B cell (primary cell): ENCODE measurements at regions of chr19 and their contacts with region 1.

Region 1: GRCh38 chr19:48646001-48646721 is at the start of gene CA11:
- DNase-seq: peak; percentile 94
- ATAC-seq: peak; percentile 87
- H3K4me3 ChIP-seq: peak within 1 kb of the TSS; percentile 52 to 95 (median 75)
- H3K4me3 Mint-ChIP-seq: peak within 1 kb of the TSS; percentile 96
- H3K27ac ChIP-seq: peak within 1 kb of the TSS; percentile 74 to 80
- H3K27ac Mint-ChIP-seq: peak within 1 kb of the TSS; percentile 98
- H3K4me1 ChIP-seq: peaks cover 23 to 45% of the 10 kb centered on the region in 2 donors
- H3K4me1 Mint-ChIP-seq: peaks cover 50% of the 10 kb centered on the region
- H3K27me3 ChIP-seq: no peaks in the 10 kb centered on the region
- H3K27me3 Mint-ChIP-seq: no peaks in the 10 kb centered on the region
- CTCF ChIP-seq: peak; percentile 80
- total RNA-seq, gene CA11: 25.7 and 27.7 TPM in 2 replicates

Region 2: GRCh38 chr19:48558018-48558684 is 88.0 kb before region 1 on chr19:
- CTCF ChIA-PET with region 1: no interaction called
- POLR2A ChIA-PET with region 1: no interaction called
- intact Hi-C with region 1: no loop called
- DNase-seq: no peak
- ATAC-seq: no peak
- H3K4me3 ChIP-seq: no peak overlapping the region
- H3K4me3 Mint-ChIP-seq: no peak overlapping the region
- H3K27ac ChIP-seq: no peak overlapping the region
- H3K27ac Mint-ChIP-seq: no peak overlapping the region
- H3K4me1 ChIP-seq: no peaks in the 10 kb centered on the region
- H3K4me1 Mint-ChIP-seq: no peaks in the 10 kb centered on the region
- H3K27me3 ChIP-seq: peaks cover 0 to 5% (median 0%) of the 10 kb centered on the region in 4 experiments
- H3K27me3 Mint-ChIP-seq: peaks cover 20% of the 10 kb centered on the region
- CTCF ChIP-seq: no peak

Region 3: DNA sequence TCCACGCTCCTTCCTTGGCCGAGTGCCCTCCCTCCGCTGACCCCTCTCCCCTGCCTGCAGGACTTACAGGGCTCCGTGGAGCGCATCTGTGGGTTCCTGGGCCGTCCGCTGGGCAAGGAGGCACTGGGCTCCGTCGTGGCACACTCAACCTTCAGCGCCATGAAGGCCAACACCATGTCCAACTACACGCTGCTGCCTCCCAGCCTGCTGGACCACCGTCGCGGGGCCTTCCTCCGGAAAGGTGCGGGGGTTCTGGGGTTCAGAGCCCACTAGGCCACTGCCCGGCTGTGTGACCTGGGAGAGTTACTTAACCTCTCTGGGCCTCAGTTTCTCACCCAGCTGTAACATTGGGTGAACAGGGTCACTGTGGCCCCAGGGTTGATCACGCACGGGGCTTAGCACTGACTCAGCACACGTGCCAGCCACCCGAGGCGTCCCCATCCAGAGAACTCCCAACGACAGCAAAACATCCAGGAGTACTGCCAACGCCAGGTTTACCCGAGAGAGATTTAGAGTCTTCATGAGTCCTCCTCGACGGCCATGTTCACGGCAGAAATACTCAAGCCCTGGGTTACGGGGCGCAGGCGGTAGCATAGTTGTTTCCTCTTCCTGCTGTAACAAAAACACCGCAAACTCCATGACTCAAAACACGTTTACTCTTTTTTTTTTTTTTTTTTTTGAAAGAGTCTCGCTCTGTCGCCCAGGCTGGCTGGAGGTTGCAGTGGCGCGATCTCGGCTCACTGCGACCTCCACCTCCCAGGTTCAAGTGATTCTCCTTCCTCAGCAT is 49.3 kb before region 1 on chr19:
- CTCF ChIA-PET with region 1: no interaction called
- POLR2A ChIA-PET with region 1: no interaction called
- intact Hi-C with region 1: no loop called
- DNase-seq: peak; percentile 53
- ATAC-seq: peak; percentile 41
- H3K4me3 ChIP-seq: no peak overlapping the region
- H3K4me3 Mint-ChIP-seq: no peak overlapping the region
- H3K27ac ChIP-seq: no peak overlapping the region
- H3K27ac Mint-ChIP-seq: no peak overlapping the region
- H3K4me1 ChIP-seq: no peaks in the 10 kb centered on the region
- H3K4me1 Mint-ChIP-seq: peaks cover 2% of the 10 kb centered on the region
- H3K27me3 ChIP-seq: peaks cover 0 to 3% (median 0%) of the 10 kb centered on the region in 4 experiments
- H3K27me3 Mint-ChIP-seq: peaks cover 4% of the 10 kb centered on the region
- CTCF ChIP-seq: no peak

Region 4: GRCh38 chr19:48624067-48624594 is 22.0 kb before region 1 on chr19:
- CTCF ChIA-PET with region 1: interaction called, 3 read pairs
- POLR2A ChIA-PET with region 1: interaction called, 19 read pairs
- intact Hi-C with region 1: no loop called
- DNase-seq: peak; percentile 96
- ATAC-seq: peak; percentile 75
- H3K4me3 ChIP-seq: peak overlapping the region in 4 of 5 experiments; percentile 29 to 60 (median 50)
- H3K4me3 Mint-ChIP-seq: peak overlapping the region; percentile 78
- H3K27ac ChIP-seq: peak overlapping the region; percentile 30 to 63
- H3K27ac Mint-ChIP-seq: peak overlapping the region; percentile 84
- H3K4me1 ChIP-seq: peaks cover 19 to 30% of the 10 kb centered on the region in 2 donors
- H3K4me1 Mint-ChIP-seq: peaks cover 38% of the 10 kb centered on the region
- H3K27me3 ChIP-seq: no peaks in the 10 kb centered on the region
- H3K27me3 Mint-ChIP-seq: no peaks in the 10 kb centered on the region
- CTCF ChIP-seq: no peak

Region 5: GRCh38 chr19:48674921-48675824 is 29.0 kb after region 1 on chr19:
- CTCF ChIA-PET with region 1: interaction called, 51 read pairs
- POLR2A ChIA-PET with region 1: no interaction called
- intact Hi-C with region 1: loop called (anchors 1 kb)
- DNase-seq: peak; percentile 87
- ATAC-seq: peak; percentile 94
- H3K4me3 ChIP-seq: no peak overlapping the region
- H3K4me3 Mint-ChIP-seq: no peak overlapping the region
- H3K27ac ChIP-seq: no peak overlapping the region
- H3K27ac Mint-ChIP-seq: peak overlapping the region; percentile 32
- H3K4me1 ChIP-seq: peaks cover 4 to 10% of the 10 kb centered on the region in 2 donors
- H3K4me1 Mint-ChIP-seq: peaks cover 6% of the 10 kb centered on the region
- H3K27me3 ChIP-seq: no peaks in the 10 kb centered on the region
- H3K27me3 Mint-ChIP-seq: peaks cover 6% of the 10 kb centered on the region
- CTCF ChIP-seq: peak; percentile 86

Region 6: GRCh38 chr19:48685583-48685982 is 39.4 kb after region 1 on chr19:
- CTCF ChIA-PET with region 1: no interaction called
- POLR2A ChIA-PET with region 1: no interaction called
- intact Hi-C with region 1: no loop called
- DNase-seq: no peak
- ATAC-seq: no peak
- H3K4me3 ChIP-seq: no peak overlapping the region
- H3K4me3 Mint-ChIP-seq: no peak overlapping the region
- H3K27ac ChIP-seq: no peak overlapping the region
- H3K27ac Mint-ChIP-seq: no peak overlapping the region
- H3K4me1 ChIP-seq: no peaks in the 10 kb centered on the region
- H3K4me1 Mint-ChIP-seq: peaks cover 2% of the 10 kb centered on the region
- H3K27me3 ChIP-seq: no peaks in the 10 kb centered on the region
- H3K27me3 Mint-ChIP-seq: no peaks in the 10 kb centered on the region
- CTCF ChIP-seq: no peak

Region 7: GRCh38 chr19:48705431-48705830 is 59.3 kb after region 1 on chr19:
- CTCF ChIA-PET with region 1: no interaction called
- POLR2A ChIA-PET with region 1: no interaction called
- intact Hi-C with region 1: no loop called
- DNase-seq: no peak
- ATAC-seq: no peak
- H3K4me3 ChIP-seq: no peak overlapping the region
- H3K4me3 Mint-ChIP-seq: no peak overlapping the region
- H3K27ac ChIP-seq: no peak overlapping the region
- H3K27ac Mint-ChIP-seq: no peak overlapping the region
- H3K4me1 ChIP-seq: no peaks in the 10 kb centered on the region
- H3K4me1 Mint-ChIP-seq: no peaks in the 10 kb centered on the region
- H3K27me3 ChIP-seq: no peaks in the 10 kb centered on the region
- H3K27me3 Mint-ChIP-seq: no peaks in the 10 kb centered on the region
- CTCF ChIP-seq: no peak

Region 8: DNA sequence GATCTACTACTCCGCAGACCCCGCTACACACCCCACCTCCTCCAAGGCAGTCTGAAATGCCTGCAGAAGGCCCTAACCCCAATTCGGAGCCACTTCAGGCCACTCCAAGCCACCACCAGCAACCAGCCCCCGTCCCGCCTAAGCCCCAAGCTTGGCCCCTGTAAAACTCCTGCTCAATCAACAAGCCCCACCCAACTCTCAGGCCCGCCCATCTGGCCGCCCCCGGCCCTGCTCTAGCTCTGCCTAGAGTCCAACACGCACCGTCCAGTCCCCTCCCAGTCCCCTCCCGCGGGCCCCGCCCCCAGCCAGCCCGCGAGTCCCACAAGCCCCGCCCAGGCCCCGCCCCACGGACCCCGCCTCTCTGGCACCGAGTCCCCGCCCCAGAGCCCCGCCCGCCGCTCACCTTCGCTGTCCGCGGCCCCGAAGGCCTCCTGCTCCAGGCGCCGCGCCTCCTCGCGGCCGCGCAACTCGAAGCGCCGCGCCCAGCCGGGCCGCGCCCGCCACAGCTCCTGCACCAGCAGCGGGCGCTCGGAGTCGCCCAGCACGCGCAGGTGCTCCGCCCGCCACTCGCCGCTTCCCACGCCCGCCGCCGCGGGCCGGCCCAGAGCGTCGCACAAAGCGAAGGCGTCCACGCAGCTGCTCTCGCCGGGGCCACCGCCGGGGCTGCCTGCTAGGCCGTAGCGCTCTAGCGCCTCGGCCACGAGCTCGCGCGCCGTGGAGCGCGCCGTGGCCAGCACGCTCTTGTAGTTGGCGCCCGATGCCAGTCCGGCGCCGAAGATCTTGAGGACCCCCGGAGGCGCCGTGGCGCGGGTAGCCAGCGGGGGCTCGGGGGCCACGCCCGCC is 92.6 kb after region 1 on chr19:
- CTCF ChIA-PET with region 1: interaction called, 8 read pairs
- POLR2A ChIA-PET with region 1: interaction called, 5 read pairs
- intact Hi-C with region 1: loop called (anchors 1 kb)
- DNase-seq: peak; percentile 91
- ATAC-seq: peak; percentile 93
- H3K4me3 ChIP-seq: peak overlapping the region in 3 of 5 experiments; percentile 48 to 65 (median 54)
- H3K4me3 Mint-ChIP-seq: peak overlapping the region; percentile 63
- H3K27ac ChIP-seq: no peak overlapping the region
- H3K27ac Mint-ChIP-seq: peak overlapping the region; percentile 67
- H3K4me1 ChIP-seq: peaks cover 22 to 25% of the 10 kb centered on the region in 2 donors
- H3K4me1 Mint-ChIP-seq: peaks cover 15% of the 10 kb centered on the region
- H3K27me3 ChIP-seq: peaks cover 0 to 26% (median 10%) of the 10 kb centered on the region in 4 experiments
- H3K27me3 Mint-ChIP-seq: peaks cover 15% of the 10 kb centered on the region
- CTCF ChIP-seq: peak; percentile 54

Region 9: GRCh38 chr19:48842789-48843162 is 196.6 kb after region 1 on chr19:
- CTCF ChIA-PET with region 1: interaction called, 6 read pairs
- POLR2A ChIA-PET with region 1: interaction called, 5 read pairs
- intact Hi-C with region 1: loop called (anchors 2 kb)
- DNase-seq: peak; percentile 79
- ATAC-seq: peak; percentile 71
- H3K4me3 ChIP-seq: no peak overlapping the region
- H3K4me3 Mint-ChIP-seq: no peak overlapping the region
- H3K27ac ChIP-seq: no peak overlapping the region
- H3K27ac Mint-ChIP-seq: no peak overlapping the region
- H3K4me1 ChIP-seq: no peaks in the 10 kb centered on the region
- H3K4me1 Mint-ChIP-seq: peaks cover 3% of the 10 kb centered on the region
- H3K27me3 ChIP-seq: no peaks in the 10 kb centered on the region
- H3K27me3 Mint-ChIP-seq: no peaks in the 10 kb centered on the region
- CTCF ChIP-seq: peak; percentile 82